IMR-90 (cell line): ENCODE measurements at regions of chr17 and their contacts with region 1.

Region 1: GRCh38 chr17:60354223-60354622 is 37.7 kb downstream of the USP32 start:
- DNase-seq: peak; percentile 85
- ATAC-seq: peak; percentile 78
- H3K4me3 ChIP-seq: no peak overlapping the region
- H3K27ac ChIP-seq: peak overlapping the region; percentile 69; the same call in 1 of the 2 replicates
- H3K4me1 ChIP-seq: peaks cover 13% of the 10 kb centered on the region
- H3K27me3 ChIP-seq: no peaks in the 10 kb centered on the region
- CTCF ChIP-seq: no peak
- POLR2A ChIP-seq: no peak
- RAD21 ChIP-seq: peak; percentile 12; the same call in 1 of the 2 replicates

Region 2: GRCh38 chr17:60315650-60316049 is 38.6 kb before region 1 on chr17:
- CTCF ChIA-PET with region 1: interaction called, 4 read pairs
- POLR2A ChIA-PET with region 1: no interaction called
- dilution Hi-C with region 1: no loop called
- in situ Hi-C with region 1: no loop called
- intact Hi-C with region 1: loop called (anchors 5 kb)
- DNase-seq: no peak
- ATAC-seq: no peak
- H3K4me3 ChIP-seq: no peak overlapping the region
- H3K27ac ChIP-seq: no peak overlapping the region
- H3K4me1 ChIP-seq: peaks cover 2% of the 10 kb centered on the region; the same call in 1 of the 2 replicates
- H3K27me3 ChIP-seq: no peaks in the 10 kb centered on the region
- CTCF ChIP-seq: 0 out of 2 replicates have a peak, but pooled peaks have one; percentile 2
- POLR2A ChIP-seq: no peak
- RAD21 ChIP-seq: no peak